Panc1 (cell line): ENCODE measurements at regions of chr10 and their contacts with region 1.

Region 1: GRCh38 chr10:79124066-79124465 is 55.3 kb downstream of the ZMIZ1 start:
- DNase-seq: no peak
- ATAC-seq: no peak
- H3K4me3 ChIP-seq: no peak overlapping the region
- H3K27ac ChIP-seq: 0 out of 2 replicates have a peak overlapping the region, but pooled peaks have one; percentile 36
- H3K4me1 ChIP-seq: peaks cover 50% of the 10 kb centered on the region
- H3K27me3 ChIP-seq: no peaks in the 10 kb centered on the region
- CTCF ChIP-seq: no peak

Region 2: GRCh38 chr10:78837946-78838657 is 286.0 kb before region 1 on chr10:
- CTCF ChIA-PET with region 1: no interaction called
- POLR2A ChIA-PET with region 1: interaction called, 10 read pairs
- in situ Hi-C with region 1: no loop called
- intact Hi-C with region 1: no loop called
- DNase-seq: no peak
- ATAC-seq: no peak
- H3K4me3 ChIP-seq: no peak overlapping the region
- H3K27ac ChIP-seq: no peak overlapping the region
- H3K4me1 ChIP-seq: no peaks in the 10 kb centered on the region
- H3K27me3 ChIP-seq: peaks cover 12% of the 10 kb centered on the region; the same call in 1 of the 2 replicates
- CTCF ChIP-seq: no peak